Mammary epithelial cell (primary cell): ENCODE measurements at regions of chr20 and their contacts with region 1.

Region 1: GRCh38 chr20:35994994-35995453 is 26.6 kb downstream of the CNBD2 start:
- DNase-seq: peak; percentile 66
- H3K4me3 ChIP-seq: no peak overlapping the region
- H3K27ac ChIP-seq: no peak overlapping the region
- H3K4me1 ChIP-seq: no peaks in the 10 kb centered on the region
- H3K27me3 ChIP-seq: no peaks in the 10 kb centered on the region
- CTCF ChIP-seq: peak; percentile 90 to 99

Region 2: DNA sequence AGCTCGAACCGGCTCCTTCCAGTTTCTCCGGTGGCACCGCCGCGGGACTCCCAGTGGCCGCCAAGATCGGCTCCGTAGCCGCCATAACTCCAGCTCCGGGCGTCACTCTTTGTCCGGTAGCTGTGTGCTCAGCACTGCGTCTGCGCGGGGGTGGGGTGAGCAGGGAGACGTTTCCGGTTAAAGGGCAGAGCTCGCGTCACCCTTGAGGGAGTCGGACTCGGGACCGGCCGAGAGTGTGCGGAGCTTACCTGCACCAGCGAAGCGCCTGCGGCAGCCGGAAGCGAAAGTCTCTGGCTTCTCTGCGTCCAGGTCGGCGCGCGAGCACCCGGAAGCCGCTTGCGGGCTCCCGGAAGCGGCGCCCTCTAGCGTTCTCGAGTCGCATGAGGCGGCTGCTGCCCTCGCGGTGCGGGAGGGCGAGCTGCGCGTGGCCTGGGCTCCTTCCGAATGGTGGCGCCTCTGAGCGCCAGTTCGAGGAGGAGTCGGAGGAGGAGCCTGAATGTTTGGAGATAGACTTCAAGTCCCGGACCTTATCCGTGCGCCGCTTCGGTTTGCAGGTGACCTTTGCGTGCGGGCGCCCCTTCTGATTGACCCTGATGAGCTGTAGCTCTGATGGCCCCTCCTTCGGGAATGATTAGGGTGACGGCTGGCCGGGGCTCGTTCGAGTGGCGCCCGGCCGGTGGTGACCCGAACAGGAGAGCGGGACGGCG is 40.7 kb before region 1 on chr20 and contains the start of gene SCAND1:
- CTCF ChIA-PET with region 1: interaction called, 22 read pairs
- dilution Hi-C with region 1: no loop called
- in situ Hi-C with region 1: no loop called
- intact Hi-C with region 1: no loop called
- DNase-seq: peak; percentile 99
- H3K4me3 ChIP-seq: peak within 1 kb of the TSS; percentile 92 to 100 (median 99)
- H3K27ac ChIP-seq: peak within 1 kb of the TSS; percentile 96
- H3K4me1 ChIP-seq: peaks cover 14% of the 10 kb centered on the region
- H3K27me3 ChIP-seq: no peaks in the 10 kb centered on the region
- CTCF ChIP-seq: peak; percentile 85 to 99
- total RNA-seq, gene SCAND1: 41.5 to 46.3 TPM

Region 3: DNA sequence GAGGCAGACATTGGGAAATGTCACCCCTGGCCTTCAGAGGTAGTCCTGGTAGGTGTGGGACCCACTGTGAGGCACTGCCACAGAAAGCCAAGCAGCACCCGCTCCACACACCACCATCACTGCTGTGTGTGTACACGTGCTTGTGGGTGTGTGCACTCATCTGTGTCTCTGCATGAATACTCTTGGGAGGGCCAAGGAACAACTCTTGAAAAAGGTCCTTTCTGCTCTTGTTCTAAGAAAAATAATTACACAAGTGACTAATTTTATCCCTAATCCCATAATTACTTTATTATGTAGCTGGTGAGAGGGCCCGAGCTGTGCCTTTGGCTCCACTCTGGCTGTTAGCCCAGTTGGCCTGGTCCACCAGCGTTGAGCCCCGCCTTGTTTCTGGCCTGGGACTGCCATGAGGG is 137.8 kb after region 1 on chr20:
- CTCF ChIA-PET with region 1: no interaction called
- dilution Hi-C with region 1: no loop called
- in situ Hi-C with region 1: loop called in 1 of 2 experiments (anchors 5 kb)
- intact Hi-C with region 1: loop called (anchors 1 kb)
- DNase-seq: no peak
- H3K4me3 ChIP-seq: no peak overlapping the region
- H3K27ac ChIP-seq: no peak overlapping the region
- H3K4me1 ChIP-seq: peaks cover 9% of the 10 kb centered on the region
- H3K27me3 ChIP-seq: no peaks in the 10 kb centered on the region
- CTCF ChIP-seq: no peak

Region 4: GRCh38 chr20:36199345-36200257 is 204.6 kb after region 1 on chr20:
- CTCF ChIA-PET with region 1: interaction called, 3 read pairs
- dilution Hi-C with region 1: no loop called
- in situ Hi-C with region 1: no loop called
- intact Hi-C with region 1: loop called (anchors 1 kb)
- DNase-seq: peak; percentile 54
- H3K4me3 ChIP-seq: no peak overlapping the region
- H3K27ac ChIP-seq: no peak overlapping the region
- H3K4me1 ChIP-seq: no peaks in the 10 kb centered on the region
- H3K27me3 ChIP-seq: no peaks in the 10 kb centered on the region
- CTCF ChIP-seq: peak; percentile 92 to 97

Region 5: GRCh38 chr20:36439040-36439730 is 444.2 kb after region 1 on chr20:
- CTCF ChIA-PET with region 1: no interaction called
- dilution Hi-C with region 1: no loop called
- in situ Hi-C with region 1: loop called in 1 of 2 experiments (anchors 25 kb)
- intact Hi-C with region 1: loop called (anchors 5 kb)
- DNase-seq: peak; percentile 37
- H3K4me3 ChIP-seq: no peak overlapping the region
- H3K27ac ChIP-seq: no peak overlapping the region
- H3K4me1 ChIP-seq: no peaks in the 10 kb centered on the region
- H3K27me3 ChIP-seq: no peaks in the 10 kb centered on the region
- CTCF ChIP-seq: peak; percentile 86 to 87